Dorsolateral prefrontal cortex (tissue), 120 donors: ENCODE measurements at regions of chr1 and their contacts with region 1.

Region 1: GRCh38 chr1:8718850-8719361 is 98.5 kb downstream of the RERE start:
- DNase-seq: no peak
- H3K4me3 ChIP-seq: no peak overlapping the region
- H3K27ac ChIP-seq: peak overlapping the region in 5 of 59 donors; percentile 2 to 47 (median 18)
- H3K27me3 ChIP-seq: no peaks in the 10 kb centered on the region
- CTCF ChIP-seq: peak in 55 of 56 donors; percentile 24 to 69 (median 52)

Region 2: GRCh38 chr1:8848663-8849386 is 129.9 kb after region 1 on chr1:
- intact Hi-C with region 1: loop called (anchors 2 to 5 kb)
- DNase-seq: peak; percentile 79 to 91 (median 88)
- H3K4me3 ChIP-seq: peak overlapping the region in 32 of 59 donors; percentile 5 to 50 (median 27)
- H3K27ac ChIP-seq: peak overlapping the region in 54 of 59 donors; percentile 4 to 88 (median 68)
- H3K27me3 ChIP-seq: no peaks in the 10 kb centered on the region
- CTCF ChIP-seq: peak; percentile 81 to 99 (median 94)